Activated CD4-positive, alpha-beta T cell treated with anti-CD3 and anti-CD28 coated beads for 36 hours (primary cell): ENCODE measurements at regions of chr7 and their contacts with region 1.

Region 1: GRCh38 chr7:123557398-123558288 is at the start of gene NDUFA5:
- DNase-seq: peak; percentile 97
- ATAC-seq: peak; percentile 98
- H3K4me3 Mint-ChIP-seq: no peak within 1 kb of the TSS
- H3K27ac Mint-ChIP-seq: no peak within 1 kb of the TSS
- H3K4me1 Mint-ChIP-seq: peaks cover 18% of the 10 kb centered on the region
- H3K27me3 Mint-ChIP-seq: peaks cover 3% of the 10 kb centered on the region
- total RNA-seq, gene NDUFA5: 62.3 to 64.0 TPM

Region 2: GRCh38 chr7:124929467-124930172 is 1372.0 kb after region 1 on chr7 and contains the start of gene POT1:
- CTCF ChIA-PET with region 1: no interaction called
- POLR2A ChIA-PET with region 1: no interaction called
- intact Hi-C with region 1: loop called (anchors 5 kb)
- DNase-seq: peak; percentile 98
- ATAC-seq: peak; percentile 100
- H3K4me3 Mint-ChIP-seq: peak within 1 kb of the TSS; percentile 100
- H3K27ac Mint-ChIP-seq: peak within 1 kb of the TSS; percentile 99
- H3K4me1 Mint-ChIP-seq: peaks cover 37% of the 10 kb centered on the region
- H3K27me3 Mint-ChIP-seq: no peaks in the 10 kb centered on the region
- total RNA-seq, gene POT1: 33.9 to 51.3 TPM